ENCODE measurements at regions of chr14 and their contacts with region 1.

Region 1: GRCh38 chr14:99266181-99267178 is 5.5 kb downstream of the BCL11B start:
- DNase-seq: peak; percentile 82
- H3K4me3 Mint-ChIP-seq: peak overlapping the region; percentile 99
- H3K27ac Mint-ChIP-seq: peak overlapping the region; percentile 100
- H3K4me1 Mint-ChIP-seq: peaks cover 72% of the 10 kb centered on the region
- H3K27me3 Mint-ChIP-seq: no peaks in the 10 kb centered on the region

Region 2: GRCh38 chr14:97978341-97978740 is 1288.1 kb before region 1 on chr14:
- intact Hi-C with region 1: loop called (anchors 2 kb)
- DNase-seq: peak; percentile 70
- H3K4me3 Mint-ChIP-seq: peak overlapping the region; percentile 84
- H3K27ac Mint-ChIP-seq: peak overlapping the region; percentile 87
- H3K4me1 Mint-ChIP-seq: peaks cover 62% of the 10 kb centered on the region
- H3K27me3 Mint-ChIP-seq: no peaks in the 10 kb centered on the region

Region 3: GRCh38 chr14:98433436-98433835 is 833.0 kb before region 1 on chr14:
- intact Hi-C with region 1: loop called (anchors 10 kb)
- DNase-seq: no peak
- H3K4me3 Mint-ChIP-seq: no peak overlapping the region
- H3K27ac Mint-ChIP-seq: peak overlapping the region; percentile 19
- H3K4me1 Mint-ChIP-seq: peaks cover 30% of the 10 kb centered on the region
- H3K27me3 Mint-ChIP-seq: no peaks in the 10 kb centered on the region

Region 4: DNA sequence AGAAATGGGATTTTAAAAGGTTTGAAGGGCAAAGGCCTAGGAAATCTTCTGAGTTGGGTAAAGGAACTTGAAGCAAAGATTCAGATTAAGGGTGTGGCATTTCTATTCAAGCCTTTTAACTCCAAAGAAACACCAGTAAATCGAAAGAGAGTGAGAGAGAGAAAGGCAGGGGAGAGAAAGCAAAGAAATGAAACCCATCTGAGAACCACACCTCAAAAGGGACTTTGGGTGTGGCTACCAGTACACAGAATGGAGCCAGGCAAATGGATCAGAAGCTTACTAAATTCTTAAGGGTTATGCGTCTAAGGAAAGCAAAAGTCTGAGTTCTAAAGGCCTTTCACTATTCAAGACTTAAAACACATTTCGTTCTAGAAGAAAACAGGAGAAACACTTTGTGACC is 271.9 kb before region 1 on chr14:
- intact Hi-C with region 1: loop called (anchors 10 kb)
- DNase-seq: peak; percentile 11
- H3K4me3 Mint-ChIP-seq: peak overlapping the region; percentile 29
- H3K27ac Mint-ChIP-seq: peak overlapping the region; percentile 74
- H3K4me1 Mint-ChIP-seq: peaks cover 34% of the 10 kb centered on the region
- H3K27me3 Mint-ChIP-seq: no peaks in the 10 kb centered on the region

Region 5: GRCh38 chr14:99245564-99246511 is 20.6 kb before region 1 on chr14:
- intact Hi-C with region 1: loop called (anchors 2 kb)
- DNase-seq: no peak
- H3K4me3 Mint-ChIP-seq: peak overlapping the region; percentile 82
- H3K27ac Mint-ChIP-seq: peak overlapping the region; percentile 99
- H3K4me1 Mint-ChIP-seq: peaks cover 87% of the 10 kb centered on the region
- H3K27me3 Mint-ChIP-seq: no peaks in the 10 kb centered on the region

Measured in activated T-helper 1 cell treated with anti-CD3 and anti-CD28 coated beads, Interleukin-12 subunit alpha, Interleukin-12 subunit beta, Interleukin-2, Interleukin-4 antibody, amounts not matched to agents 30 ng/mL and 10 ng/mL and 1 ng/mL, durations not matched to agents 14 hours and 24 hours and 36 hours (primary cell).